ENCODE measurements at regions of chr7 and their contacts with region 1.

Region 1: DNA sequence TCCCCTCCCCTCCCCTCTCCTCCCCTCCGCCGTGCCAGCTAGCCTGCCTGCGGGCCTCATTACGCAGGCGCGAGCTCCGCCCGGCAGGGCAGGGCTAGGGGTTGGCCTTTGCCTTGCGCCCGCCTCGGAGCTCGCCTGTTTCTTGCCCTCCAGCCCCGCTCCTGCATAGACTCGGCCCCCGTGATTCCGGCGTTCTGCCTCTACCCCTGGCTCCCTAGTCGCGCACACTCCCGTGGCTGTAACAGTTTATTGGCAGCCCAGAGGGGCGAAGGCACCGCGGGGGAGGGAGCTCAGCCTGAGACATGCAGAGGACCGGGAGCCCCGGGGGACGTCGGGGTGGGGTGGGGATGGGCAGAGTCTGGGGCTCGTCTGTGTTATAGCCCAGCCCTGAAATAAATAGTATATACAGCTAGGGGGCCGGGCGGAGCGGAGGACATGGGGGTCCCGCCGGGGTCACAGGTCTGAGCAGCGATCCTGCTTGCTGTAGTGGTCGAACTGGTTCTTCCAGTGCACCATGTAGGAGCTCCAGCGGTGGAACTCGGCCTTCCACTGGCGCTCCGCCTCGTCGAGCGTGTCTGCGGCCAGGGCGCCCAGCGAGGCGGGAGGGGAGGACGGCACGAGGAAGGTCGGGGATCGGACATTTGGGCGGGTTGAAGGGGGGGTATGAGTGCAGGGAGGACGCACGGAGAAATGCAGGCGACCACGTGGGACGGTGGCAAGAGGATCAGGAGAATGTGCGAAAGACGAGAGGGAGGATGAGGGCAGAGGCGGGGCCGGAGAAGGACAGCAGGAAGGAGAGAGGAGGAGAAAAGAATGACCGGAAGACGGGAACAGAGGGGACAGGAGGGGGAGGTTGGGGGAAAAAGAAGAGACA is 483 bp upstream of the UFSP1 start:
- DNase-seq: peak; percentile 89
- ATAC-seq: peak; percentile 85
- H3K4me3 Mint-ChIP-seq: peak overlapping the region; percentile 87
- H3K27ac Mint-ChIP-seq: peak overlapping the region; percentile 76
- H3K4me1 Mint-ChIP-seq: peaks cover 50% of the 10 kb centered on the region
- H3K27me3 Mint-ChIP-seq: peaks cover 23% of the 10 kb centered on the region
- CTCF ChIP-seq: no peak

Region 2: DNA sequence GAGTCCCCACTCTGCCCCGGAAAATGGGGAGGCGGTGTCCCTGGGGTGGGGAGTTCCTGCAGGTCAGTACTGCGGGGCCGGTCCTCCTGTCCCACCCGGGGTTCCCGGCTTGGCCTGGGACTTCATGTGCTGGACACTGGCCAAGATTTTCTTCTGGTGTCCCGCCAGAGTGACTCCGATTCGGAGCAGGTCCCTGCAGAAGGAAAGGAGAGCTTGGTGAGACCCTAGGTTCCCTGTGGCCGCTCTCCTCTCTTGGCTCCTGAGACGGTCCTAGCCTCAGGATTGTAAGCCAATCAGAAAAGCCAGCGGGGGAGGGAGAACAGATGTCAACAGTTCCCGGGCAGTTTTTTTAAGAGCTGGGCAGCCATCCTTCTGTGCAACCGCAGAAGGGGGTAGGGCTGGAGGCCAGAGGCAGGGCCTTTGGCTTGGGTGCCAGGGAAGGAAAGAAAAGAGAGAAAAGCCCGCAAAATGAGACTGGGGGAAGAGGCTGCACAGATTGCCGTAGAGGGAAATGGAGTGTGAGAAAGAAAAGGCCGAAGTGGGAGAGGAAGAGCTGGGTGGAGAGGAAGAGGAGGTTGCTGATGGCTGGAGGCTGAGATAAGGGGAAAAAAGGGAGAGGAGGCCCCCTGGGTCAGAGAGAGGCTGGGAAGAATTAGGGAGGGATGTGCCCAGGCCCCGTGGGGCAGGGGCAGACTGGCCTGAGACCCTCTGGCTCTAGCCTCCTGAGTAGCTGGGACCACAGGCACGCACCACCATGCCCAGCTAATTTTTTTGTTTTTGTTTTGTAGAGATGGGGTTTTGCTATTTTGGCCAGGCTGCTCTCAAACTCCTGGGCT is 86.4 kb before region 1 on chr7:
- CTCF ChIA-PET with region 1: no interaction called
- POLR2A ChIA-PET with region 1: interaction called, 4 read pairs
- intact Hi-C with region 1: loop called (anchors 2 kb)
- DNase-seq: peak; percentile 62
- ATAC-seq: peak; percentile 97
- H3K4me3 Mint-ChIP-seq: peak overlapping the region; percentile 76
- H3K27ac Mint-ChIP-seq: peak overlapping the region; percentile 84
- H3K4me1 Mint-ChIP-seq: peaks cover 36% of the 10 kb centered on the region
- H3K27me3 Mint-ChIP-seq: no peaks in the 10 kb centered on the region
- CTCF ChIP-seq: no peak

Region 3: DNA sequence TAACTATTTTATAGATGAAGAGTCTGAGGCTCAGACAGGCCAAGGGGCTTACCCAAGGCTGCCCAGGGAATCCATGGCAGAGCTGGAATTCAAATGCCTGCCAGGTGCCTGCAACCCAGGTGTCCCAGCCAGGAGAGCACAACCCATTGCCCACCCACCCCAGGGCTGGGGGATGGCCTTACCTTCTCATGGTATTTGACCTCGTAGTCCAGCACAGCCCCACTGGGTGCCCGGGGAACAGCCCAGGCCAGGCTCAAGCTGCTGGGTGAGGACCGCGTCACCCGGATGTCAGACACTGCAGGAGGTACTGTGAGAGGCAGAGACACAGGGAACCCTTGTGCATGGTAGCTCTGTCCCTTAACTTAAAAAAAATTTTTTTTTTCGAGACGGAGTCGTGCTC is 71.7 kb before region 1 on chr7:
- CTCF ChIA-PET with region 1: no interaction called
- POLR2A ChIA-PET with region 1: no interaction called
- intact Hi-C with region 1: no loop called
- DNase-seq: no peak
- ATAC-seq: no peak
- H3K4me3 Mint-ChIP-seq: no peak overlapping the region
- H3K27ac Mint-ChIP-seq: no peak overlapping the region
- H3K4me1 Mint-ChIP-seq: no peaks in the 10 kb centered on the region
- H3K27me3 Mint-ChIP-seq: no peaks in the 10 kb centered on the region
- CTCF ChIP-seq: no peak

Region 4: DNA sequence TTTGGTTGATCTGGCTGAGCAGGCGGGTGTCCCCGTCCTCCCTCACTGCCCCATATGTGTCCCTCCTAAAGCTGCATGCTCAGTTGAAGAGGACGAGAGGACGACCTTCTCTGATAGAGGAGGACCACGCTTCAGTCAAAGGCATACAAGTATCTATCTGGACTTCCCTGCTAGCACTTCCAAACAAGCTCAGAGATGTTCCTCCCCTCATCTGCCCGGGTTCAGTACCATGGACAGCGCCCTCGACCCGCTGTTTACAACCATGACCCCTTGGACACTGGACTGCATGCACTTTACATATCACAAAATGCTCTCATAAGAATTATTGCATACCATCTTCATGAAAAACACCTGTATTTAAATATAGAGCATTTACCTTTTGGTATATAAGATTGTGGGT is 168.4 kb after region 1 on chr7:
- CTCF ChIA-PET with region 1: interaction called, 13 read pairs
- POLR2A ChIA-PET with region 1: interaction called, 4 read pairs
- intact Hi-C with region 1: no loop called
- DNase-seq: peak; percentile 43
- ATAC-seq: no peak
- H3K4me3 Mint-ChIP-seq: no peak overlapping the region
- H3K27ac Mint-ChIP-seq: no peak overlapping the region
- H3K4me1 Mint-ChIP-seq: no peaks in the 10 kb centered on the region
- H3K27me3 Mint-ChIP-seq: peaks cover 32% of the 10 kb centered on the region
- CTCF ChIP-seq: no peak

Region 5: GRCh38 chr7:101126651-101127280 is 236.8 kb after region 1 on chr7 and contains the start of gene SERPINE1:
- CTCF ChIA-PET with region 1: no interaction called
- POLR2A ChIA-PET with region 1: interaction called, 15 read pairs
- intact Hi-C with region 1: no loop called
- DNase-seq: peak; percentile 25
- ATAC-seq: peak; percentile 76
- H3K4me3 Mint-ChIP-seq: peak within 1 kb of the TSS; percentile 47
- H3K27ac Mint-ChIP-seq: no peak within 1 kb of the TSS
- H3K4me1 Mint-ChIP-seq: peaks cover 47% of the 10 kb centered on the region
- H3K27me3 Mint-ChIP-seq: peaks cover 19% of the 10 kb centered on the region
- CTCF ChIP-seq: no peak
- total RNA-seq, gene SERPINE1: not detected in 2 replicates

Region 6: DNA sequence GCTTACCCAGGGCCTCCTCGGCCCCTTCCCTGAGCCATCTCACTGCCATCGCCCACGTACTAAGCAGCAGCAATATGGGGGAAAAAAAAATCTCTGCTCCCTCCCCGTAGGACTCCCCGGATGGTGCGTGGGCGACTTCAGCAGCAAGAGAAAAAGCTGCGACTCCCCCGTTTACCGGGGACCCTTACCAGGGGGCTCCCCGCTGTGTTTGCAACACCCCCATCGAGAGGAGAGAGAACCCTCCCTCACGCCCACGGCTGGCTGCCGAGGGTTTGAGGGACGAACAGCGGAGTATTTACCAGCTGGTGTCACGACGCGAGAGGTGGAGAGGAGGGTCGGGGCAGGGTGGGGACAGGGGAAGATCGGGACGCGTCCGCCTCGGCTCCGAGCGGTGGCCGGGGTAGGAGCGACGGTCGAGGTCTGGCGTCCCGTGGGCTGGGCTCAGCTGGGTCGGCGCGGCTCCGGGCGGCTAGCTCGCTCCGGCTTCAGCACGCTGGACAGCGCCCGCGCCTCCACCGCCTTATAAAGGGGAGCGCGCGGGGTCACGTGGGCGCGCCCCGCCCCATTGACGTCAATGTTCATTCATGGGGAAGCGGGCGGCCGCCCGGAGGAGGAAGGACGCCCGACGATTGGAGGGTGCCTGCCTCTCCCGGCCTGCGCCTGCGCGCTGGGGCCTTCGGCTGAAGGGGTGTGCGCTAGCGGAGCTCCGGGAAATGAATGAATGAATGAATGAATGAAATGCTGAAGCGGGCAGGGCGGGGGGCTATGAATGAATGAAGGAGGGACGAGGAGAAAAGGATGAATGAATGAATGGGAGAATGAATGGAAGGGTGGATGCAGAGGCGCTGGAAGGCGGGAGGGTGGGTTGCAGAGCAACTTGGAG is 275.3 kb after region 1 on chr7 and contains the start of gene VGF:
- CTCF ChIA-PET with region 1: no interaction called
- POLR2A ChIA-PET with region 1: no interaction called
- intact Hi-C with region 1: loop called (anchors 2 kb)
- DNase-seq: peak; percentile 92
- ATAC-seq: peak; percentile 80
- H3K4me3 Mint-ChIP-seq: peak within 1 kb of the TSS; percentile 82
- H3K27ac Mint-ChIP-seq: peak within 1 kb of the TSS; percentile 53
- H3K4me1 Mint-ChIP-seq: peaks cover 46% of the 10 kb centered on the region
- H3K27me3 Mint-ChIP-seq: peaks cover 42% of the 10 kb centered on the region
- CTCF ChIP-seq: no peak
- total RNA-seq, gene VGF: 0.07 and 0.11 TPM in 2 replicates

Region 7: DNA sequence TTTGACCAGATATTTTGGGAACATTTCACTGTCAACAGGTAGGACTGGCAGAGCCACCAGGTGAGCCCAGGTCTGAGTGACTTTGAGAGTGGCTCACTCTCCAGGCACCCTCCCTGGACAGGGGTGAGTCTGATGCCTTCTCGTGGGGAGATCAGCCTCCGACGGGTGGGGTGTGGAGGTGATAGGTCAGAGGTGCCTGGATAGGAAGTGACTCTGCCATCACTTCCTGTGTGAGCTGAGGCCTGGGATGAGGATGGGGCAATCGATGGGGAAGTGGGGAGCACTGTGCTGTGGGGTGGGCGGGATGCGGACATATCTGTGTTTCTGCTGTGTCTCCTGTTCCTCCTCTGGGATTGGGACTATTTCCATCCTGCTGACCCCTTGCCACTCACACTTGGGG is 397.0 kb after region 1 on chr7:
- CTCF ChIA-PET with region 1: interaction called, 6 read pairs
- POLR2A ChIA-PET with region 1: no interaction called
- intact Hi-C with region 1: loop called (anchors 1 kb)
- DNase-seq: no peak
- ATAC-seq: no peak
- H3K4me3 Mint-ChIP-seq: no peak overlapping the region
- H3K27ac Mint-ChIP-seq: no peak overlapping the region
- H3K4me1 Mint-ChIP-seq: peaks cover 20% of the 10 kb centered on the region
- H3K27me3 Mint-ChIP-seq: peaks cover 10% of the 10 kb centered on the region
- CTCF ChIP-seq: no peak